ENCODE measurements at regions of chr6 and their contacts with region 1.

Region 1: GRCh38 chr6:150813319-150813992 is 52.0 kb upstream of the MTHFD1L start:
- DNase-seq: peak; percentile 62
- CTCF ChIP-seq: no peak

Region 2: GRCh38 chr6:150395398-150396009 is 418.0 kb before region 1 on chr6:
- CTCF ChIA-PET with region 1: interaction called, 13 read pairs
- POLR2A ChIA-PET with region 1: no interaction called
- DNase-seq: peak; percentile 64
- CTCF ChIP-seq: peak; percentile 67

Region 3: DNA sequence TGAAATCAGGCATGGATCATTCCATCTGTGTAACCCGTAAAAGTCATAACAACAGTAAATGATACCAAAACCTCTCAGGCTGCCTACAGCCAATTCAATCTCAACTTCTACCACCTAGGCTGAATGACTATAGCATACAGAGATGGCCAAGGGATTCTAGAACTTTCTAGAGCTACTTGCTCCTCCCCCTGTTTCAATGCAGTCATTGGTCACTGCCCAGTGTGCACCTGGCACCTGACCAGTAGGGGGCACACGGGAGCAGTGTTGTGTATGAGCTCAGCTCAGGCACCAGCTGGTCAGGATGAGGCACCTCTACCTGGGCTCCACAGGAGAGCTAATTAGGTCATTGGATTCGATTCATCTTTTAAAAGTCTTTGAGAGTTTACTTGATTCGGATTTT is 127.6 kb before region 1 on chr6:
- CTCF ChIA-PET with region 1: interaction called, 33 read pairs
- POLR2A ChIA-PET with region 1: no interaction called
- DNase-seq: peak; percentile 69
- CTCF ChIP-seq: peak; percentile 77

Region 4: GRCh38 chr6:150800674-150801314 is 12.7 kb before region 1 on chr6:
- CTCF ChIA-PET with region 1: interaction called, 24 read pairs
- POLR2A ChIA-PET with region 1: no interaction called
- DNase-seq: no peak
- CTCF ChIP-seq: no peak

Region 5: DNA sequence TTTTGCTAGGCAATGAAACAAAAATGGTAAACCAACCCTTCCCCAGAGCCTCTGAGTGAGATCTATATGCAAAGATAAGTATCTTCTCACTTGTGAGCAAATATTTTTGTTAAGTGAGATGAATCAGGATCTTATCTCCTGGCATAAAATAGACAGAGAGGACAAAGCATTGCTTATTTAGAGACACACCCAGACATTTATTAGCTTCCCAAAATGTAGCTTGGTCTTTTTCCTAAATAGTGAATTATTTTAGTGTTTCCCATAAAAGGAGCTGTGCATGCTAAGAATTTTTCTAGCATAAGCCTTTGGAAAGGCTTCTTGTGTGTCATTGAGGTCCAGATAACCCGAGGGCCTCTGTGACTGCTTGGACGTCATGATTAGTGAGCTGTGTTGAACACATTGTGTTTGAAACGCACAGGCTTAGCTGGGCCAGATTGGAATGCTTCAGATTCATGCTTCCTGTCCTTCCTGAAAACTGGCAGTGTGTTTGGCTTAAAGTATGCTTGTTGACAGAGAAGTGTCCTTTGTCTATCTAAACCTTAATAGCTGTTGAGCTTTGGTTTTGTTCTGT is 68.5 kb after region 1 on chr6:
- CTCF ChIA-PET with region 1: interaction called, 11 read pairs
- POLR2A ChIA-PET with region 1: no interaction called
- DNase-seq: no peak
- CTCF ChIP-seq: no peak

Region 6: DNA sequence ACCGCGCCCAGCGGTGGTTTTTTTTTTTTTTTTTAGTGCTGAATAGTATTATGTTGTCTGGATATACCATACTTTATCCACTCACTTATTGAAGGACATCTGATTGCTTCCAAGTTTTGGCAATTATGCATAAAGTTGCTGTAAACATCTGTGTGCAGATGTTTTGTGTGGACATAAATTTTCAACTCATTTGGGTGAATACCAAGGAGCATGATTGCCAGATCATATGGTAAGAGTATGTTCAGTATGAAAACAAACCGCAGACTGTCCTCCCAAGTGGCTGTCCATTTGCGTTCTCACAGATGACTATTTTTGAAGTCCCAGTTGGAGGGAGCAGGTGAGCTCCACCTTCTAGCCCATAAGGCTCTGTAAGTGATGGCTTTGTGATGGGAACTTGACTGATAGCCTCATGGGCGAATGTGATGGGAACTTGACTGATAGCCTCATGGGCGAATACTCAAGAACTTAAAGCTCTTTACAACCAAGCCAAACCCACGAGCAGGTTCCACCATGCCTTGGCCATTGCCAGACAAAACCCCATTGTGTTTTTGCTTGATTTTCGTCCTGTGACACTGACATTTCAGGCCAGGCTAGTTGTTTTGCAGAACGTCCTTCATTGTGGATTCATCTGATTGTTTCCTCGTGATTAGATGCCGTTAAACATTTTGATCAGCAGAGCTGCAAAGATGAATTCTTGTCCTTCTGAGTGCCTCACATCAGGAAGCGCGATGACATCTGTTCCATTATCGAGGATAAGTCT is 526.9 kb after region 1 on chr6:
- CTCF ChIA-PET with region 1: interaction called, 26 read pairs
- POLR2A ChIA-PET with region 1: no interaction called
- DNase-seq: no peak
- CTCF ChIP-seq: no peak

Measured in GM10248 (cell line).